ENCODE measurements at regions of chr10 and their contacts with region 1.

Region 1: GRCh38 chr10:14878266-14879054 is at the start of gene SUV39H2:
- DNase-seq: peak; percentile 87 to 98
- H3K4me3 ChIP-seq: peak within 1 kb of the TSS; percentile 79 to 93 (median 88)
- H3K27ac ChIP-seq: peak within 1 kb of the TSS; percentile 92
- H3K4me1 ChIP-seq: peaks cover 3 to 11% (median 7%) of the 10 kb centered on the region in 4 experiments; a peak in 6 of 7 replicates
- H3K27me3 ChIP-seq: no peaks in the 10 kb centered on the region
- CTCF ChIP-seq: 0 out of 4 replicates have a peak, but pooled peaks of 1 of the 3 experiments have one; percentile 2
- EP300 ChIP-seq: peak in 1 of 2 experiments; percentile 53; a peak in 1 of 3 replicates
- POLR2A ChIP-seq: peak; percentile 85 to 92
- RAD21 ChIP-seq: no peak
- total RNA-seq, gene SUV39H2: 54.9 and 62.3 TPM in 2 replicates

Region 2: DNA sequence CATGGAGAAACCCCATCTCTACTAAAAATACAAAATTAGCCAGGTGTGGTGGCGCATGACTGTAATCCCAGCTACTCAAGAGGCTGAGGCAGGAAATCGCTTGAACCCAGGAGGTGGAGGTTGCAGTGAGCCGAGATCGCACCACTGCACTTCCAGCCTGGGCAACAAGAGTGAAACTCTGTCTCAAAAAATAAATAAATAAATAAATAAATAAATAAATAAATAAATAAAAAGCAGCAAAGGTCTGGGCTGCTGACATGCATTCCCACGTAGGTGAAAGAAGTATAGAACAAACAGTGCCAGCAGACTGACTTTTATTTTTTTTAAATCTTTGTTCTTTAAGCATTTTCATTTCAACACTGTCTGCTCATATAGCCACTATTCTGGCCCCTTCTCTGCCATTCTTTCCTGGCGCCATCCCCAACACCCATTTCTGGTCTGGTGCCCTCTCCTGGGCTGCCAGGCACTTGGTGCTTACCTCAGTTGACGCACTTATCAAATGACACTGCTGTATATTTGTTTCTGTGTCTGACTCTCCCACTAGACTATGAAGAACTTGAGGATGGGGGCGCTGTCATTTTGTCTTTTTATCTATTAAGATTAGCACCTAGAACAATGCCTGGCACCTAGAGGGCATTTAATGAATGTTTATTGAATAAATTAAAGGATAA is 119.3 kb before region 1 on chr10:
- CTCF ChIA-PET with region 1: no interaction called
- POLR2A ChIA-PET with region 1: no interaction called
- DNase-seq: no peak
- H3K4me3 ChIP-seq: no peak overlapping the region
- H3K27ac ChIP-seq: no peak overlapping the region
- H3K4me1 ChIP-seq: no peaks in the 10 kb centered on the region
- H3K27me3 ChIP-seq: no peaks in the 10 kb centered on the region
- CTCF ChIP-seq: peak; percentile 5 to 26 (median 21); a peak in 2 of 4 replicates
- EP300 ChIP-seq: no peak
- POLR2A ChIP-seq: no peak
- RAD21 ChIP-seq: peak in 1 of 2 experiments; percentile 36; a peak in 1 of 4 replicates

Region 3: DNA sequence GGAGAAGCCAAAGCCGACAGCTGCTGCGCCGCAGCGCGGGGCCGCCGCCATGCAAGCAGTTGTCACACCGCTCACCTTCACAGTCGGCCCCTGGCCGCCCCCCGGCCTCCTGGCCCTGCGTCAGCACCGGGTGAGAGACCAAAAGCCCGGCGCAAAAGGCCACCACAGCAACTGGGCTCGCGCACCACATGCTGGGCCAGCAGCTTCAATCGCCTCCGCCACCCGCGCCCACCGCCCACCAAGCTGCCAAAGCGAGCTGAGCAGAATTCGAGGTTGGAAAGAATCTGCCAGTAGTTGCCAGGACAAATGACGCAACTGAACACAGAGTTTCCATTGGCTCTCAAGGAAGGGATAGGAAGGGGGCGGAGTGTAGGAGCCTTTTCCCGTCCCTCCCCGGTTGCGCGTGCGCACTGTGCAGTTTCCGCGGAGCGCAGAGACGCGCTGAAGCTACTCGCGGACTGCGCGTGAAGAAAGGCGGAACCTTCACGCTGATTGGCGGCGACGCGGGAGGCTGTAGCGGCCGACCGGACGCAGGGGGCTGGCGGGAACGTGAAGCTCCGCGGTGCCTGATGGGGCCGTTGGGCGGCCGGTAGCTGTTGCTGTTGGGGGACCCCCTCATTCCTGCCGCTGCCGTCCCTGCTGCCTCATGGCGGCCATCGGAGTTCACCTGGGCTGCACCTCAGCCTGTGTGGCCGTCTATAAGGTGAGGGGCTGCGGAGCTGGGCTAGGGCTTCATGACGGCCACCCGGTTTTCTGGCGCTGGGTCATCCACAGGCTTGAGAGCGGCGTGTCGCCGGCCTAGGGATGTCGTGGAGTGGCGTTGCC is 40.5 kb before region 1 on chr10 and contains the starts of genes CDNF, HSPA14 and MSANTD7:
- CTCF ChIA-PET with region 1: no interaction called
- POLR2A ChIA-PET with region 1: interaction called, 32 read pairs
- DNase-seq: peak; percentile 97 to 98
- H3K4me3 ChIP-seq: peak within 1 kb of the TSS; percentile 87 to 93 (median 91)
- H3K27ac ChIP-seq: peak within 1 kb of the TSS; percentile 91
- H3K4me1 ChIP-seq: peaks cover 0 to 8% (median 3%) of the 10 kb centered on the region in 4 experiments; a peak in 3 of 7 replicates
- H3K27me3 ChIP-seq: no peaks in the 10 kb centered on the region
- CTCF ChIP-seq: no peak
- EP300 ChIP-seq: peak in 1 of 2 experiments; percentile 10; a peak in 1 of 3 replicates
- POLR2A ChIP-seq: peak; percentile 84 to 93
- RAD21 ChIP-seq: no peak
- total RNA-seq, gene CDNF: 0.32 and 0.36 TPM in 2 replicates
- total RNA-seq, gene HSPA14: 32.9 and 36.4 TPM in 2 replicates
- total RNA-seq, gene MSANTD7: 15.2 and 16.0 TPM in 2 replicates

Region 4: DNA sequence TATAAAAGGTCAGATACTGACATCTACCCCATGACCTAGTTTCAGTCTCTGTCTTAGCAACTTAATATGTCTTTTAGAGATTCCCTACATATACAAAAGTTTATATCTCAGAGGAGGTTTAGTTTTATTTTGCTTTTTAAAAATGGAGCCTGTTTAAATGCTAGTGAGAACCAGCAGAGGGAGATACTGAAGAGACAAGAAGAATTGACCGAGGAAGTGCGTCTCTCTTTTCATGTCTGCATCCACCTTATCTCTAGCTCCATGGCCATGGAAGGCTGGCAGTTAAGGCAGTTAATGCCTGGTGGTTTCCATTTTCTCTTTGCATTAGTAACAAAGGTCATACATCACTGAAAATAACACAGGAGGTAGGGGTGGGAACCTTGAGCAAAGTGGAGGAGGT is 10.9 kb after region 1 on chr10:
- CTCF ChIA-PET with region 1: interaction called, 19 read pairs
- POLR2A ChIA-PET with region 1: interaction called, 9 read pairs
- DNase-seq: no peak
- H3K4me3 ChIP-seq: no peak overlapping the region
- H3K27ac ChIP-seq: no peak overlapping the region
- H3K4me1 ChIP-seq: no peaks in the 10 kb centered on the region
- H3K27me3 ChIP-seq: no peaks in the 10 kb centered on the region
- CTCF ChIP-seq: peak in 2 of 3 experiments; percentile 11 to 51; a peak in 2 of 4 replicates
- EP300 ChIP-seq: no peak
- POLR2A ChIP-seq: no peak
- RAD21 ChIP-seq: no peak; a peak in 1 of 4 replicates

Measured in H1 (cell line).